GM18951 (cell line): ENCODE measurements at regions of chr11 and their contacts with region 1.

Region 1: GRCh38 chr11:118956094-118956846 is at the start of gene UPK2:
- POLR2A ChIP-seq: no peak

Region 2: GRCh38 chr11:118883368-118884071 is 72.8 kb before region 1 on chr11 and contains the start of gene CXCR5:
- in situ Hi-C with region 1: no loop called
- POLR2A ChIP-seq: no peak

Region 3: DNA sequence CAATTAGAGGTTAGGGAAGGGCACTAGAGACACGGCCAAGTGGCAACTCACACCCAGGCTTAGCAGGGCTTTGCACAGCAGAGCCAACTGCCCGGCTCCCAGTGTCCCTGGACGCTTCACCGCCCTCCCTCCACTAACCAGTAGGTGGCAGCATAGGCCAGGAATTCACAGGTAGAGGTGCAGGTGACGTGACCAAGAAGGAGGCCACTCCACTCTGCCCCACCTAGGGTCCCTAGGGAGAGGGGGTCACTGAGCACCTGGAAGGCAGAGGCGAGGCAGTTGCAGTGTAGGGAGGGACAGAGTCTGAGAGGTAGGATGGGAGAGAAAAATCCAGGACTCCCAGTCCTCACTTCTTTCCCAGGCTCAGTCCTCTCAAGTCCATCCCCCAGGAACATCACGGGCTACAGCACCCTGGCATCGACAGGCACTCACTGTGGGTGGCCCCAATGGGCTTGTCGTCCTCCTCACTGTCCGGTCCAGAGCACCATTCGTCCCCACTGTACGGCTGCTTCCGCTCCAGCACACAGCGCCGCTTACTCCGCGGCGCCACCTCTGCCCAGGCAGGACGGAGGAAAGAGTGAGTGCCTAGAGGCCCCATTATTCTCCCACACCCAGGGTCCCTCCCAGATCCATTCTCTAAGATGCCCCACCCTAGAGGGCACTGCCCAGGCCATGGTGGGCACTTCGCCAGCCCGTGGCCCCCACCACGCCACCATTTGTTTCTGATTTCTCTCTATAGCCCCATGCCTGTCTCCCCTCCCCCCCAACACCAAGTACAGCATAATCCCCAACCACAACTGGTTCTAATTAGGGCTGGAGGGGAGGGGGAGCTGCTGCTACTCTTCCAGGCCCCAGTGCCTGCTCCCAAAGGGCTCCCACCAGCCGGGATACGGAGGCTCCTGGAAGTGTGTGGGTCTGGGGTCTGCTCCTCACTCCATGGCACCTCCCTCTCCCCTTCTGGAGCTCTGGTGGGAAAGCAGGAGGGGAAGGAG is 48.9 kb before region 1 on chr11:
- in situ Hi-C with region 1: loop called (anchors 10 kb)
- POLR2A ChIP-seq: no peak